A549 (cell line): ENCODE measurements at regions of chr12 and their contacts with region 1.

Region 1: GRCh38 chr12:569803-570434 is 93.3 kb downstream of the NINJ2 start:
- DNase-seq: peak; percentile 87 to 95
- ATAC-seq: peak; percentile 37 to 69
- H3K4me3 ChIP-seq: peak overlapping the region; percentile 62
- H3K27ac ChIP-seq: peak overlapping the region; percentile 97 to 98
- H3K4me1 ChIP-seq: peaks cover 30% of the 10 kb centered on the region
- CTCF ChIP-seq: peak; percentile 92
- EP300 ChIP-seq: no peak
- POLR2A ChIP-seq: no peak
- RAD21 ChIP-seq: peak; percentile 95 to 98

Region 2: GRCh38 chr12:553205-554000 is 16.5 kb before region 1 on chr12:
- CTCF ChIA-PET with region 1: interaction called, 46 read pairs
- POLR2A ChIA-PET with region 1: no interaction called
- DNase-seq: no peak
- ATAC-seq: no peak
- H3K4me3 ChIP-seq: no peak overlapping the region
- H3K27ac ChIP-seq: peak overlapping the region; percentile 11 to 42; a peak in 3 of 6 replicates
- H3K4me1 ChIP-seq: peaks cover 13% of the 10 kb centered on the region; the same call in 2 of the 3 replicates
- CTCF ChIP-seq: no peak
- EP300 ChIP-seq: no peak
- POLR2A ChIP-seq: no peak
- RAD21 ChIP-seq: no peak

Region 3: GRCh38 chr12:614411-614970 is 44.6 kb after region 1 on chr12:
- CTCF ChIA-PET with region 1: interaction called, 41 read pairs
- POLR2A ChIA-PET with region 1: no interaction called
- DNase-seq: peak in 1 of 2 experiments; percentile 76
- ATAC-seq: peak; percentile 65 to 83; a peak in 5 of 6 replicates
- H3K4me3 ChIP-seq: no peak overlapping the region
- H3K27ac ChIP-seq: peak overlapping the region; percentile 71 to 75
- H3K4me1 ChIP-seq: peaks cover 30% of the 10 kb centered on the region
- CTCF ChIP-seq: peak; percentile 54
- EP300 ChIP-seq: no peak
- POLR2A ChIP-seq: no peak
- RAD21 ChIP-seq: peak; percentile 84 to 91

Region 4: DNA sequence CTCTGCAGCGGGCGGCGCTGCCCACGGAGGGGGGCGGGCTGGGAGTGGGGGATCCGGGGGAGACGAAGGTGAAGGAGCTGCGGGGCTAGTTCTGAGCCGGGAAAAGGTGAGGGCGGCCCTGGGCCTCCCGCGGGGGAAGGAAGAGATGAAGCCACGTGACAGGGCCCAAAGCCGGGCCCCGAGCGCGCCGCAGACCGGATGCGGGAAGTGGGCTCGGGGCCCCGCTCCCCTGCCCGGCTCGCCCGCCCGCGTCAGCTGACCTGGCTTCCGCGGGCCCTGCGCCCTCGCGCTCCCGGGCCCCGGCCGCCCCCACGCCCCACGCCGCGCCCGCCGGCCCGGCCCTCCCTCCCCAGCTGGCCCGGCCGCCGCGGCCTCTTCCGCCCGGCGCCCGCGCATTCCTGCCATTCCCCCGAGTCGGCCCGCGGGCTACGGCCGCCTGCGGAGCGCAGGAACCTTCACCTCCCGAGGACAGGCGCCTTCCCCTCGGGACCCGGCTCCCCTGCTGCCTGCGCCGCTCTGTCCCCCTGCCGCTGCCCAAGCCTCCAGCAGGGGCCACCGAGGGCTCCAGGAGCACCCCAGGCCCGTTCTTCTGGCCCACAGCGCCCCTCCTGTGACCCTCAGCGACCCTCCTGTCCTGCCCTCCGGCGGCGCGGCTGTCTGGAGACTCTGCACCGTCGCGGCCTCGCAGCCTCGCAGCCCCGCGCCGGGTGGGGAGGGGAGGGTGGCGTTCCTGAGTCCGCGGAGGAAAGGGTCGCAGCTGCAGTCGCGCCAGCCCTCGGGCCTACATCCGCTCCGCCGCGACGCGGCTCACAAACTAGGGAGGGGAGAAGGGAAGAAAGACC is 72.9 kb after region 1 on chr12:
- CTCF ChIA-PET with region 1: interaction called, 5 read pairs
- POLR2A ChIA-PET with region 1: interaction called, 15 read pairs
- DNase-seq: peak; percentile 82 to 83
- ATAC-seq: peak; percentile 73 to 88
- H3K4me3 ChIP-seq: peak overlapping the region; percentile 50
- H3K27ac ChIP-seq: peak overlapping the region; percentile 98
- H3K4me1 ChIP-seq: peaks cover 49% of the 10 kb centered on the region
- CTCF ChIP-seq: peak; percentile 24; the same call in 2 of the 3 replicates
- EP300 ChIP-seq: no peak; a peak in 1 of 5 replicates
- POLR2A ChIP-seq: peak; percentile 24; the same call in 1 of the 2 replicates
- RAD21 ChIP-seq: peak in 1 of 2 experiments; percentile 13; a peak in 2 of 5 replicates

Region 5: GRCh38 chr12:846421-846820 is 276.5 kb after region 1 on chr12:
- CTCF ChIA-PET with region 1: interaction called, 10 read pairs
- POLR2A ChIA-PET with region 1: no interaction called
- DNase-seq: no peak
- ATAC-seq: no peak
- H3K4me3 ChIP-seq: no peak overlapping the region
- H3K27ac ChIP-seq: no peak overlapping the region
- H3K4me1 ChIP-seq: peaks cover 46% of the 10 kb centered on the region
- CTCF ChIP-seq: no peak
- EP300 ChIP-seq: no peak
- POLR2A ChIP-seq: no peak
- RAD21 ChIP-seq: no peak

Region 6: DNA sequence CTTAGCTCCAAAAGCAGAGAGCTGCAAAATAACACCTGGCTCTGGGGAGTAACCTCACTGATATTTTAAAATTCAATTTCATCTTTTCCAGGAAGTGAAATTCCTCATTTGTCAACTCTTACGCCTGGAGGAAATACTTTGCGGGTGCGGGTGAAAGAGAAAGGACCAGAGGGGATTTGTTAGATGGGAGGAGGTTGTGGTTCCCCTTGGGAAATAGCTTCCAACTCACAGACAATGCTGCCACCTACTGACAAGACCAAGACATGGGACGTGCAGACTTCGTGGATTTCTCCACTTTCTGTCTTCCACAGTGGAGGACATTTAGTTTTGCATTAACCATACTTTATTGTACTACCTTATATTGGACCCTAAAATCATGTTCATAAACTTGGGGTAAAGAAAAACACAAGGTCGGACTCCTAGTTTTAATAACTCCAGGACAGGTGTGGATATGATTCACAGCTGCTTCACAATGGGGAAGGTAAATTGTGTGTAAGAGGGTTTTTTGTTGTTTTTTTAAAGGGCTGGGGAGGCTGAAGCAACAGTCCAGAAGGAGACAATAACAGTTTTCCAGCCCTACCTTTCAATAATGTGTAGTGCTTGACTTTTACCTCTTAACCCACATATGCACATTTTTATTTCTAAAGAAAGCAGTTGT is 1013.6 kb after region 1 on chr12:
- CTCF ChIA-PET with region 1: interaction called, 10 read pairs
- POLR2A ChIA-PET with region 1: no interaction called
- DNase-seq: peak; percentile 74 to 87
- ATAC-seq: peak; percentile 77 to 91; a peak in 5 of 6 replicates
- H3K4me3 ChIP-seq: no peak overlapping the region
- H3K27ac ChIP-seq: no peak overlapping the region
- H3K4me1 ChIP-seq: 0 out of 3 replicates have a peak, but pooled peaks cover 2% of the 10 kb centered on the region
- CTCF ChIP-seq: peak; percentile 96
- EP300 ChIP-seq: no peak
- POLR2A ChIP-seq: no peak
- RAD21 ChIP-seq: peak; percentile 97 to 98